ENCODE measurements at regions of chr2 and their contacts with region 1.

Region 1: DNA sequence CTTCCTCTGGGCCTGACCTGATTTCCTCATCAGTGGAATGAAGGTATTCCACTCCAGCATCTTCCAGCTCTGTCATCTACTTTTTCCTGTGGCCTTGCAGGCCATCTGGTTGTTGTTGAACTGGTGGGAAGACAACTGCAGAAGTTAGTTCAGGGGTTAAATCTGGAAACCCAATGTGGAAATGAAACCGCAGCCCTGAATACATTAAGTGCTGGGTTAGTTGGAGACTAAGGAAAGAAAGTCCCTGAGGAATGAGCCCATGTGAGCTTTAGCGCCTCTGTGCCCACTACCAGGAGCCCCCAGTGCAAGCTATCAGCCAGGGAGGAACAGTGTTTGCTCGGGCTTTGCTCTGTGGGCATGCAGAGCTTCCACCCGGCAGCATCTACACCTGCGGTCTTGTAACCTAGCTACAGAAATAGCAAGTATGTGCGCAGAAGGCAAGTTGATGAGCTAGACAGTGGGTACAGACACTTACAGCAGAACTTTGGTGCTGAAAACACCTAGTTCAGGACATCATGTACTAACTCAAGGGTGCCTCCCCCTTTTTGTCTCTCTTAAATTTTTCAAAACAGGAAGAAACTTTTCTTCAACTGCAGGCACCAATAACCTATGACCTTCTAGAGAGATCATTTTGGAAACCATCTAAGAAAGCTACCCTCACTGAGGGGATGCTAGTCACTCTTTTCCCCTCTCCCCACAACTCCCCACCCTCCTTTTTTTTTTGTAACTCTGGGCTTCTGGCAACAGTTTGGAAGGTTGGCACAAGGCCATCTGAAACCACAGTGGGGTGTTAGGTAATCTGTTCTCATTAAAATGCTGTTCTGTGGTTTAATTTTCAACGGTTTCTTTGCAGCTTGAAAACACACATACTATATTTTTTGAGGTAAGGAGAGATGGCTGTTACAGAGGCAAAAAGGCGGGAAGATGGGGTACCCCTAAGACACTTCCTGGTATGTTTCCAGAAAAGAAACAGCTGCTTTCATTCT is 18.3 kb upstream of the CXCR4 start:
- DNase-seq: peak; percentile 78
- H3K4me3 Mint-ChIP-seq: no peak overlapping the region
- H3K27ac Mint-ChIP-seq: peak overlapping the region; percentile 79
- H3K4me1 Mint-ChIP-seq: peaks cover 94% of the 10 kb centered on the region
- H3K27me3 Mint-ChIP-seq: peaks cover 25% of the 10 kb centered on the region

Region 2: GRCh38 chr2:135913727-135914365 is 222.4 kb before region 1 on chr2:
- CTCF ChIA-PET with region 1: interaction called, 12 read pairs
- intact Hi-C with region 1: loop called (anchors 1 kb)
- DNase-seq: peak; percentile 65
- H3K4me3 Mint-ChIP-seq: no peak overlapping the region
- H3K27ac Mint-ChIP-seq: no peak overlapping the region
- H3K4me1 Mint-ChIP-seq: peaks cover 10% of the 10 kb centered on the region
- H3K27me3 Mint-ChIP-seq: no peaks in the 10 kb centered on the region

Region 3: DNA sequence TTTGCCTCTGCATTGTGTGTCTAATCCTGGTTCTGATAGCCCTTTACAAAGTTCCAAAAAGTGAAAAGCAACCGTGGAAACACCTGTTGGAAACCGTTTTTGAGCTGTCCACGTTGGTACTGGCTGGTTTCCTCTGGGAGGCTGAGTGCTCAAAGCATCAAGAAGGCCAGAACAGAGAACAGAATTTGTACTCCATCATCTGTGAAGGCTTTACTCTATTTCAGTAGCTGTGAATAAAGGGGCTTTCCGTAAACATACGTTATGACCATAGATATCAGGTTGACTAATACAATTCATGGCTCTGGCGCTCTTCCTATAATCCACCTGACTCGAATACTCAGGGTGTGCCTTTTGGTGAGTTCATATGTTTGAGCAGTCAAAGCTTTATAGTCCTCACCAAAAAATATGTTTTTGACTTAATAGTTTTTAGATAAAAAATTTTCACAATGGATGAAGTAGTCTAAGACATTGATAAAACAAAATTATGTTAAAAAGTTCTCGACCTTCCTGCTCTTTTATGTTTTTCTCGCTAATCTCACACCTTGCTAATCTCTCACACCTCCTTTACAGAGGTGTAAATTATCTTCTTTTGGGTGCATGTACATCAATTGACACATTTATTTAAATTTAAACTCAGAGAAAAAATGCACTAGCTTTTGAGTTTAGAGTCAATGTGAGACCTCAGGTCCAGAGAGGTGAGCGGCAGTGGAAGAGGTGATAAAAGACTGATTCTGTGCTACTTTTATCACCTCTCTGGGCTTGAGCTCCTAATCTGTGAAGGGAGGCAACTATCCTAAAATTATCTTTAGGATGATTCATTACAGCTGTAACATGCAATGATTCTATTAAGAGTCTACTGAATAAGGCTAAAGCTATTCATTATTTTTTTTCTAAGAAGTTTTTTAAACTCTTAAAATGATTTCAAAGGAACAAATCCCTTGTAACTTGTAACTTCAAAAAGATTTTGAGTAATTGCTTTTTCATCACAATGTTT is 83.5 kb before region 1 on chr2:
- CTCF ChIA-PET with region 1: interaction called, 6 read pairs
- intact Hi-C with region 1: loop called (anchors 1 kb)
- DNase-seq: peak; percentile 53
- H3K4me3 Mint-ChIP-seq: peak overlapping the region; percentile 53
- H3K27ac Mint-ChIP-seq: peak overlapping the region; percentile 96
- H3K4me1 Mint-ChIP-seq: peaks cover 88% of the 10 kb centered on the region
- H3K27me3 Mint-ChIP-seq: no peaks in the 10 kb centered on the region

Region 4: DNA sequence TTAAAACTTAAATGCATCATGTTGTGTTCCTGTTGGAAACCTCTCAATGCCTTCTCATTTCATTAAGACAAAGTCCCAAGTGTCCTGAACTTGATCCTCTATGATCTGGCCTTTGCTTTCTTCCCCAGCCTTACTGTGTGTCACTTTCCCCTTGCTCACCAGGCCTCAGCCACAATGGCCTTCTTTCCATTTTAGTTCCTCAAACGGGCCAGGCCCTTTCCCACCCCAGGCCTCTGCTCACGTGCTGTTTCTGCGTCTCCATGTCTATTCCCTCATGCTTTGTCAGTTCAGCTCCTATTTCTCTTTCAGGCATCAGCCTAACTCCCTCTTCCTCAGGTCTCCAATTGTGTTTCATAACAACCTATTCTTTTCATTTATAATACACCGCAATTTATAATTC is 37.8 kb before region 1 on chr2:
- CTCF ChIA-PET with region 1: no interaction called
- intact Hi-C with region 1: no loop called
- DNase-seq: no peak
- H3K4me3 Mint-ChIP-seq: no peak overlapping the region
- H3K27ac Mint-ChIP-seq: no peak overlapping the region
- H3K4me1 Mint-ChIP-seq: peaks cover 2% of the 10 kb centered on the region
- H3K27me3 Mint-ChIP-seq: no peaks in the 10 kb centered on the region

Region 5: DNA sequence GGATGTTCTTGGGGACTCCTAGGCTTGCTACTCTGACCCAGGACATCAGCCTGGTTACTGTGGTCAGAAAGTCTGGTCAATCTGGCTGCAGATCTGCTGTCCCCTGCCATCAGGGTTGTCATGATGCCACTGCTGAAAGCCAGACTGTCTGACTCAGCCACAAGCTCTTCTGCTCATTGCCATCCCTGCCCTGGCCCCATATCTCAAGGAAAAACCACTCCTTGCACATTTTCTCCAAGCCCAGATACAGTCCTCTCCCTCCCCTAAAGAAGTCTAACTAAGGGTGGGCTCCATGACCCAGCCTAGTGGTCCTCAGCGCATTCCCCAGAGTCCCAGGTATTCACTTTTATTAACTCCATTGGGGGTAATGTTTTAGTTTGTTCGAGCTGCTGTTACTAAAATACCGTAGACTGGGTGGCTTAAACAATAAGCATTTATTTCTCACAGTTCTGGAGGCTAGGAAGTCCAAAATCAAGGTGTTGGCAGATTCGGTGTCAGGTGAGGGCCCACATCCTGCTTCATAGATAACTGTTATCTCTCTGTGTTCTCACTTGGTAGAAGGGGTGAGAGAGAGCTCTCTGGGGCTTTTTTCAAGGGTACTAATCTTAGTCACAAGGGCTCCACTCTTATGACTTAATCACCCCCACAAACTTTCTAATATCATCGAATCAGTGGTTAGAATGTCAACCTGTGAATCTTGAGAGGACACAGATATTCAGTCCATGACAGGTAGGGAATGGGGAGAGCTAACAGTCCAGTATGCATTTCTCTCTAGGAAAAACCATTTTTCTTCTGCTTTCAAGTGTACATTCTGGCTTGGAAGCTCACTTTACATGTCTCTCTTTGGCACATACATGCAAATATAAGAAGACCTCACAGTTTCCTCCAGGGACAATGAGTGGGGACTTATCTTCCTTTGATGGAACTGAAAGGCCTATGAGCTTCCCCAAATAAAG is 76.5 kb after region 1 on chr2:
- CTCF ChIA-PET with region 1: no interaction called
- intact Hi-C with region 1: loop called (anchors 1 kb)
- DNase-seq: peak; percentile 67
- H3K4me3 Mint-ChIP-seq: no peak overlapping the region
- H3K27ac Mint-ChIP-seq: peak overlapping the region; percentile 3
- H3K4me1 Mint-ChIP-seq: peaks cover 43% of the 10 kb centered on the region
- H3K27me3 Mint-ChIP-seq: no peaks in the 10 kb centered on the region

Region 6: DNA sequence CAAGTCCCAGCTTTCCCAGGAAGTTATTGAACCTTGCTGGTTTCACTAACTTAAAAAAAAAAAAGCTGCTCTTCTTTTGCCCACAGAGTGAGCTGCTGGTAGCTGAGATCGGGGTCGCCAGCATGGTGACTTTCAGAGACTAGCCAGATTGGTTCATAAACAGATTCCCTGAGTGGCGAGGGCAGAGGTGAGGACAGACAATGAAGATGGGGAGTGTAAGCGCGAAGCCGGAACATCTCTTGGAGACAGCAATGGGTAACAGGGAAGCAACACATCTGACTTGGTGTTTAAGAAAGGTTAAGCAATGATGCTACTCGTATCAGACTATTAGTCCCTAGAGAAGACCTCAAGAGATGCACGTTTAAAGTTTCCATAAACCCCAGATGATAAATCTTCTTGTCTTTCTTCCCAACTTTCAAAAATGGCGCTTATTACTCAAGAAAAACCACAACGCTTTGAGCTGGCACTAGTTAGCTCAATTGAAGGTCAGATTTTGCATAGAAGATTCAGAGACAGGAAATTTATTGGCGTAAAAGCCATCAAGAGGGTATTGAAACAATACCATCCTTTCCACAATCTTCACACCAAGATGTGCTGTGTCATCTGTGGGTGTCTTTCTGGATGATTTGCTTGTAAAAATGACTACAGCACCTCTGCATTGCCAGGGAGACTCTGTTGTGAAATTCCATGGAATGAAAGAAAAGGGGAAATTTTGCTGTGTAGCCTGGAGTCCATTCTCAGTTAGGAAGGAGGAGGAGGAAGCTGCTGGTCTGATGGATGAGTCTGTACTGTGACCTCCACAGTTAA is 174.8 kb after region 1 on chr2:
- CTCF ChIA-PET with region 1: no interaction called
- intact Hi-C with region 1: loop called (anchors 1 kb)
- DNase-seq: peak; percentile 60
- H3K4me3 Mint-ChIP-seq: no peak overlapping the region
- H3K27ac Mint-ChIP-seq: peak overlapping the region; percentile 82
- H3K4me1 Mint-ChIP-seq: peaks cover 18% of the 10 kb centered on the region
- H3K27me3 Mint-ChIP-seq: no peaks in the 10 kb centered on the region